ENCODE measurements at regions of chr6 and their contacts with region 1.

Region 1: DNA sequence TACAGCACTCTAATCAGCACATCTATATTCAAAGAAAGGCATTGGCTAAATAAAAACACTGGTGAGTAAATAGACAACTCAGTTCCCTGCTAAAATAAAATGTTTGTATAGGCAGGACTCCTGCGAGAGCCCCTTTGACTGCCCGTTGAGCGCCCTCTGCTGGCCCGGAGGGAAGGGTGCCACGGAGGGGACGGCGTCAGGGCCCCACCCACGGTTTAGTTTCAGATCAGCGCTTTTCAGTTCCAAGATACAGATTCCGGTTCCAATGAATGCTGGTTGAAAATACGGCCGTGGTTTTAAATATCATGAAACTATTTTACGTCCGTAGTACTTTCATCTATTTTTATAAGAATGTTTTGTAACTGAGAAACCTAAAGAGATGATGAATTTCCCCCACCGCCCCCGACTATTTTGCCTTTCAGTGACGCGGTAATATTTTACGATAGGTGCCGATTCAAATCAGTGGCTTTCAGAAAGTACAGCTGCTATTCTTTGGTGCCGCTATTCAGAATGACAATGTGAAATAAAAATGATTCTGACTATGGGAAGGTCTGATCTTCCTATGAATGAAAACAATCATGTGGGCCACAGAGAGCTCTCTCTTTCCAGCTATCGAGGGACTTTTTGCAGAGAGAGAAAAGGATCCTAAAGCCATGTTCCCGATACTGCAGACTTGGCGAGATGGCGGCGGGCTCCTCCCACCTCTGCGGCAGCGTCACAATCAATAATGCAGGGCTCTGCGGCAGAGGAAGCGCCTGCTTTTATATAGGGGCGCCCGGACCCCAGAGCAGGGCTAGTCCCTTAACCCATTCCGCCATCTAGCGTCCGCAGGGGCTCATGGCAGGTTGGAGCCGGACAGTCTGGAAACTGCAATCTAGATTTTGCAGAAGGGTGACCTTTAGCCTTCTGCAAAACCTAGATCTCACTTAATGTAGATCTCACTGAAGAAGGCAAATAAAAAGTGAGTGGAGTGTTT is 10.6 kb upstream of the CCN6 start:
- DNase-seq: peak; percentile 92 to 96 (median 96)
- H3K4me3 ChIP-seq: peak overlapping the region; percentile 20 to 97 (median 86)
- H3K27ac ChIP-seq: peak overlapping the region; percentile 91 to 93
- H3K4me1 ChIP-seq: peaks cover 0 to 8% (median 2%) of the 10 kb centered on the region in 4 experiments
- H3K27me3 ChIP-seq: no peaks in the 10 kb centered on the region

Region 2: DNA sequence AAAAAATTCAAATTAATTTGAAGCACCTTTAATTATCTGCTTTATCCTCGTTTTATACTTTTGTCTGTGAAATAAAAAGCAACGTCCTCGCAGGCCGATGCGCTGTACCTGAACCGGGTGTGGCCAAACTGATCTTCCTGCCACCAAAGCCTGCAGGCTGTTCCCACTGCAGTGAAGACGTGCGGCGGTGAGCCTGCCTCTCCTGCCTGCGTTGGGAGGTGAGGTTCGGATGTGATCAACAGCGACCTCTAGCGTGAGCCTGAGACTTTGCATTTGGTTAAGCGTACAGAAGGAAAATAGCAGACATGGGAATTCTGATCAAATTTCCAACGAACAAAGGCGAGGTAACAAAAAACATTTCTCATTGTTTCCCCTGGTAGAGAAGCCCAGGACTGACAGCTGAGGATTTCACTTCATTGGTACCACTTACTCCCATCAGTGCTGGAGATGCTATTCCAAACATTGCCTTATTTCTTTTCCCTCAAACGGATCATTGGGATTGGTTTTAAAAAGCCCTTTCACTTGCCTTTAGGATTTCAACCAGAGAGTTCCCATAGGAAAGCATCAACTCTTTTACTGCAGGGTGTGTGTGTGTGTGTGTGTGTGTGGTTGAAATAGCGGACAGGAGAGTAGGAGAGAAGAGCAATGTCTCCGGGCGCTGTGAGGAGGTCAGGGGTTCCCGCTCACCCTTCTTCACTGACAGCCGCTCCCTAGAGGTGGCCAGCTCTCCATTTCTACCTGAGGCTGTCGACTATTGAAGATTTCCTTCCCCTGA is 46.1 kb before region 1 on chr6:
- CTCF ChIA-PET with region 1: interaction called, 12 read pairs
- POLR2A ChIA-PET with region 1: no interaction called
- DNase-seq: peak; percentile 75 to 80 (median 78)
- H3K4me3 ChIP-seq: peak overlapping the region in 2 of 7 experiments; percentile 32 to 54
- H3K27ac ChIP-seq: no peak overlapping the region
- H3K4me1 ChIP-seq: peaks cover 0 to 11% (median 6%) of the 10 kb centered on the region in 4 experiments
- H3K27me3 ChIP-seq: peaks cover 0 to 3% (median 0%) of the 10 kb centered on the region in 5 experiments

Region 3: DNA sequence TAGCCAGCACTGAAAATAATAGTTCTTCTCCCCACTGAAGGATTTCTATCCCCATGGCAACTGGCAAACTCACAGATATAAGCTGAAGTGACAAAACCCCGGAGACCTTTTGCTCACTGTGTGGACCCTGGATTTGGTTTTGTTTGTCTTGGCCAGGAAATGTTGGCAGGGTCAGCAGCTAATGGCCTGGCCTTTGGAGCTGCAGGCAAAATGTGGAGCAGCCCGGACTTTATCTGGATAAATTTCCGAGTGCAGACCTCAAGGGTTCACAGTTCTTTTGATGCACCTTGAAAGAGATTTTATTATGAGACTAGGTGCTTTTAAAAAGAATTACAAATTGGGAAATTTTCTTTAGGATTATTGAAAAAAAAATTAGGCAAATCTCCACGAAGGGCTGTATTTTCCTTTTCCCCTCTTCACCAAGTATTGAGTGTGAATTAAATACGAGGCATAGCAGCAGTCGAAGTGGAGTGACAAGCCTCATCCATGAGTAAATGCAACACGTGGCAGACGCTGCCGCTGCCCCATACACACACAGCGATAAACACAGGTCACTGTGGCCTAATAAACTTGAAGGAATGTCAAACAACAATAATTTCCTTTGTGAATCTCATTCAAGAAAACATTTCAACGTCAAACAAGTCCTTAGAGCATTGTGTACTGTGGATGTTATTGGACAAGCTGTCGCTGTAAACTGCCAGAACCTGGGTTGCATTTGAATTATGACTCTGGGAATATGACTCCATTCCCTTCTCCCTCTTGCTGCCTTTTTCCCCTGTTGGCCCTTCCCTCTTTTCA is 24.5 kb before region 1 on chr6:
- CTCF ChIA-PET with region 1: interaction called, 51 read pairs
- POLR2A ChIA-PET with region 1: no interaction called
- DNase-seq: no peak
- H3K4me3 ChIP-seq: no peak overlapping the region
- H3K27ac ChIP-seq: no peak overlapping the region
- H3K4me1 ChIP-seq: no peaks in the 10 kb centered on the region
- H3K27me3 ChIP-seq: no peaks in the 10 kb centered on the region

Region 4: DNA sequence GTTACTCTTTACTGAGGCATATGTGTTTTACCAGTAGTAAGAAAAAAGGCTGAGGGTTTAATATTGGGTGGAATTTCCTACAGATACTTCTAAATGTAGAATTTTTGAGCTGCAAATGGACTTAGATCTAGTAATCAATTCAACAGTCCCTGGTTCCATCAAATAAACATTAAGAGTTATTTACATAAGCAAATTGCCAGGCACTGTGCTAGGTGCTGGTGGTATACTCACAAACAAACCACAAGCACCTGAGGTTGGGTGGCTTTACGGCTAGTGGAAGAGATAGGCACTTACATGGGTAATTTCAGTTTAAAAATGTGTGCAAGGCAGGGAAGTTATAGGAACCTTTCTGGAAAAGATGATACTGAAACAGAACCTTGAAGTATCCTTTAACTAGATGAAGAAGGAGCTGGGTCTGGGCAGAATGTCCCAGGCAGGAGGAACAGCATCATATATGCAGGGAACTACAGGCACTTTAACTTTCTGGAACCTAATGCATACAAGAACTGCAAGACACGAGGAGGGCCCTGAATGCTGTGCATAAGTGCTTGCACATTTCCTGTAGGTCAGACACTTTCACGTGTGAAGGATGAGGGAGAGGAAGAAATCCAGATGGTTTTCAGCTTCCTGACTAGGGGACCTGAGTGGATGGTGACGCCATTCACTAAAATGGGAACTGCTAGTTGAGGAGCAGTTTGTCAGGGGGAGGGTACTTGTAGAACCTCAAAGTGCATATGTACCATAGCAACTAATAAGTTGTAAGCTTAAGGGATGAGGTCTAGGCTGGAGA is 15.1 kb after region 1 on chr6:
- CTCF ChIA-PET with region 1: interaction called, 22 read pairs
- POLR2A ChIA-PET with region 1: no interaction called
- DNase-seq: peak; percentile 9 to 57 (median 53)
- H3K4me3 ChIP-seq: no peak overlapping the region
- H3K27ac ChIP-seq: no peak overlapping the region
- H3K4me1 ChIP-seq: peaks cover 0 to 4% (median 0%) of the 10 kb centered on the region in 4 experiments
- H3K27me3 ChIP-seq: no peaks in the 10 kb centered on the region

Region 5: DNA sequence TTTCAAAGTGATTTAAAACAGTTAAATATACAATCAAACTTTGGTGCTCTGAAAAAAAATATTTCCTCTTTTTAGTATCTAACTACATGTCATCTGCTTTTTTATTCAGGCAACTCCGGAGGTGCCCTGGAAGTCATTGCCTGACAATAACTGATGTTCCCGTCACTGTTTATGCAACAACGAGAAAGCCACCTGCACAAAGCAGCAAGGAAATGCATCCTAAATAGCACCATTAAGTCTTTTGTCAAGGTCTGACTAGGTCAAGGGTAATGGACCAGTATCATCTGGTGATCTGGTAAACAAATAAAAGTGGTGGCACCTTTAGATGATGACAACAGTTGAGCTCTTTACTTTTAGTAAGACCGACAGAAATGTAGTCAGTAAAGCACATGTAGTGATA is 57.2 kb after region 1 on chr6:
- CTCF ChIA-PET with region 1: no interaction called
- POLR2A ChIA-PET with region 1: no interaction called
- DNase-seq: no peak
- H3K4me3 ChIP-seq: no peak overlapping the region
- H3K27ac ChIP-seq: no peak overlapping the region
- H3K4me1 ChIP-seq: no peaks in the 10 kb centered on the region
- H3K27me3 ChIP-seq: no peaks in the 10 kb centered on the region

Region 6: GRCh38 chr6:112163295-112164257 is 120.3 kb after region 1 on chr6:
- CTCF ChIA-PET with region 1: interaction called, 17 read pairs
- POLR2A ChIA-PET with region 1: no interaction called
- DNase-seq: peak; percentile 57 to 89 (median 81)
- H3K4me3 ChIP-seq: peak overlapping the region in 5 of 7 experiments; percentile 16 to 68 (median 47)
- H3K27ac ChIP-seq: no peak overlapping the region
- H3K4me1 ChIP-seq: peaks cover 0 to 15% (median 12%) of the 10 kb centered on the region in 4 experiments
- H3K27me3 ChIP-seq: peaks cover 0 to 4% (median 0%) of the 10 kb centered on the region in 5 experiments